CD8-positive, alpha-beta memory T cell (primary cell): ENCODE measurements at regions of chr7 and their contacts with region 1.

Region 1: GRCh38 chr7:91940572-91941341 is at the start of gene AKAP9:
- DNase-seq: peak; percentile 82 to 92 (median 89)
- H3K4me3 ChIP-seq: peak within 1 kb of the TSS; percentile 93
- H3K4me3 Mint-ChIP-seq: peak within 1 kb of the TSS; percentile 91 to 100 (median 94)
- H3K27ac ChIP-seq: peak within 1 kb of the TSS; percentile 92
- H3K27ac Mint-ChIP-seq: peak within 1 kb of the TSS; percentile 86 to 99 (median 97)
- H3K4me1 ChIP-seq: peaks cover 26% of the 10 kb centered on the region
- H3K4me1 Mint-ChIP-seq: peaks cover 42 to 51% (median 50%) of the 10 kb centered on the region in 3 donors
- H3K27me3 ChIP-seq: no peaks in the 10 kb centered on the region
- H3K27me3 Mint-ChIP-seq: peaks cover 0 to 3% of the 10 kb centered on the region in 2 donors
- total RNA-seq, gene AKAP9: 34.9 to 40.3 TPM

Region 2: DNA sequence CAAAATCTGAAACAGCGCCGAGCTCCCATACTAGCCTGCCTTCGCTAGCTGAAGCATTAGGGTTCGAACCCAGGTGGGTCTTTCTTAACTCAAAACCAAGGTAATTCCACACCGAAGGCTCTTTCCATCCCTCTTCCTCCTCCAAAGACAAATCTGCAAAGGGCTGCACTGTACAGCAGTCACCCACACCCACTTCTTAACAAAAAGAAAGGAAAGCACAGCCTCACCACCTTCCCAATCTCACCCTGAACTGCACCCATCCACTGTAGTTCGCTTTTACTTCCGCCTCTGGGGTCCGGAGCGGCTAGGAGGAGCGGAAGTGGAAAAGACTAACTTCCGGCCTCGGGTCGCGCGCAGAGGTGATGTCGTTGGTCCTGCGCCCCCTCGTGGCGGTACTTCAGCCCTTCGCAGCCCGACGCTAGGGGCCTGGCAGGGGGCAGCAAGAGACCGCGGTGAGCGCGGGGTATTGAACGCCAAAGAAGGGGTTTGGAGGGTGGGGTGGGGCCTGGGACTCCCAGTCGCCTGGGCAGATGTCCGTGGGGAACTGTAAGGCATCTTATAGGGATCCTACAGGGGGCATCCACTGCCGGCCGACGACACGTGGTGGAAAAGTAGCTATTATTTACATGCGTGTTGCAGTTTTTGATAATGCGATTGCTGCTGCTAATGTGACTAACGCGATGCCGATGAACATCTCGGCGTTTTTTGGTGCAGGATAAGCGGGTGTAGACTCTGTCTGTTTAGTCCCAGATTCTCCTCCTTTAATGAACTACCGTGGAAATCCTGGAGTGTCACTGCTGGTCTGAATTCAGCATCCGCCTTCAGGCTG is 60.1 kb before region 1 on chr7 and contains the start of gene MTERF1:
- CTCF ChIA-PET with region 1: interaction called, 20 read pairs
- POLR2A ChIA-PET with region 1: interaction called, 19 read pairs
- DNase-seq: peak; percentile 88 to 93 (median 89)
- H3K4me3 ChIP-seq: peak within 1 kb of the TSS; percentile 98
- H3K4me3 Mint-ChIP-seq: peak within 1 kb of the TSS; percentile 93 to 99 (median 95)
- H3K27ac ChIP-seq: peak within 1 kb of the TSS; percentile 72
- H3K27ac Mint-ChIP-seq: peak within 1 kb of the TSS; percentile 53 to 98 (median 96)
- H3K4me1 ChIP-seq: peaks cover 20% of the 10 kb centered on the region
- H3K4me1 Mint-ChIP-seq: peaks cover 37 to 50% (median 50%) of the 10 kb centered on the region in 3 donors
- H3K27me3 ChIP-seq: no peaks in the 10 kb centered on the region
- H3K27me3 Mint-ChIP-seq: no peaks in the 10 kb centered on the region
- total RNA-seq, gene MTERF1: 20.4 to 21.4 TPM

Region 3: GRCh38 chr7:91953618-91954017 is 12.9 kb after region 1 on chr7:
- CTCF ChIA-PET with region 1: interaction called, 10 read pairs
- POLR2A ChIA-PET with region 1: no interaction called
- DNase-seq: no peak
- H3K4me3 ChIP-seq: no peak overlapping the region
- H3K4me3 Mint-ChIP-seq: no peak overlapping the region
- H3K27ac ChIP-seq: no peak overlapping the region
- H3K27ac Mint-ChIP-seq: no peak overlapping the region
- H3K4me1 ChIP-seq: peaks cover 9% of the 10 kb centered on the region
- H3K4me1 Mint-ChIP-seq: peaks cover 44 to 75% (median 71%) of the 10 kb centered on the region in 3 donors
- H3K27me3 ChIP-seq: no peaks in the 10 kb centered on the region
- H3K27me3 Mint-ChIP-seq: no peaks in the 10 kb centered on the region

Region 4: DNA sequence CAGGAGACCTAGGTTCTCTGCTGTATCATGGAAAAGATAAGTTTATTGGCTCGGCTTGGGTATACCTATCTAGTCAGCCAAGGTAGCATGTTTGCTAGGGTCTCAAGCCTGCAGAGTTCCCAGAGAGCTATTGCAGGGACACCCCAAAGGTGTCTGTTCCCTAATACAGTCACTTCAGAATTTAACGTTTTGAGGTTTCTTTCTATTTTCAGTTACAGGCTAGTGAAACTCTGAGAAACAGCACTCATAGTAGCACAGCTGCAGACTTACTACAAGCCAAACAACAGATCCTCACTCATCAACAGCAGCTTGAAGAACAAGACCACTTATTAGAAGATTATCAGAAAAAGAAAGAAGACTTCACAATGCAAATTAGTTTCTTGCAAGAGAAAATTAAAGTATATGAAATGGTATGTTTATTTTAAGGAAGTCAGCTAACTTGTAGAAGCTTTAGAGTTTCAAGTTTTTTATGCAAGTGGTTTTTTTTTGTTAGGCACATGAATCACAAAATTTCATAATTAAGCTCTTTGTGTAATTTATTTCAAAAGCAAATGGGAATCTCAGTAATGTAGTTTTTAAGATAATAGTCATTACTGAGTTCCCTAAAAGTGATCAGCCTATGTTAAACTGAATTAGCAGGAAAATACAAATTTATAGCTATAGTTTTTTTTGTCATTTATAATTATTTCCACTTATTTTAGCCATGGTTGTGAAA is 54.8 kb after region 1 on chr7:
- CTCF ChIA-PET with region 1: no interaction called
- POLR2A ChIA-PET with region 1: no interaction called
- DNase-seq: no peak
- H3K4me3 ChIP-seq: no peak overlapping the region
- H3K4me3 Mint-ChIP-seq: no peak overlapping the region
- H3K27ac ChIP-seq: no peak overlapping the region
- H3K27ac Mint-ChIP-seq: no peak overlapping the region
- H3K4me1 ChIP-seq: no peaks in the 10 kb centered on the region
- H3K4me1 Mint-ChIP-seq: peaks cover 0 to 5% (median 3%) of the 10 kb centered on the region in 3 donors
- H3K27me3 ChIP-seq: no peaks in the 10 kb centered on the region
- H3K27me3 Mint-ChIP-seq: no peaks in the 10 kb centered on the region